Endothelial cell of umbilical vein (primary cell): ENCODE measurements at regions of chr5 and their contacts with region 1.

Region 1: GRCh38 chr5:96565582-96566265 is 96.5 kb upstream of the CAST start:
- DNase-seq: peak; percentile 79
- H3K4me3 ChIP-seq: no peak overlapping the region
- H3K27ac ChIP-seq: peak overlapping the region; percentile 97
- H3K4me1 ChIP-seq: peaks cover 71% of the 10 kb centered on the region
- H3K27me3 ChIP-seq: no peaks in the 10 kb centered on the region
- CTCF ChIP-seq: no peak
- POLR2A ChIP-seq: no peak

Region 2: DNA sequence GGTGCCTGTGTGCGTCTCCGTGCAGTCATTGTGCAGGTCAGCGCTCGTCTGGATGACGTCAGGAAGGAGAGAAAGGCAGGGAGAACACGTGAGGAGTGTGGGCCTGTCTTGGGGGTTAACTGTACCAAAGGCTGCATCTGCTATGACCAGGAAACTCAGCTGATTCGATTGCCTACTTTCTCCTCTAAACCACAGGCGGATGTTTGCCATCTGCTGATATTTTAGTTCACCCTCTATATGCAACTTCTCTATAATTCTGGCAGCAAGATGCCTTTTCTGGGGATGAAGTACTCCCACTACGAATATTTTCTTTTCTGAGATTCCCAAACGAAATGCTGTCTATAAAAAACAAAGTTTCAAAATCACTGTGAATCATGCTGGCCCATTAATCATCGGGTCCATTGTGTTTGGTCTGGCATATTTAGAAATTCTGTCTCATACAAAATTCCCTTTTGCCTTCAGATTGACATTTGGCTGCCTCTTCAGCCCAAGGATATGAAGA is 157.4 kb before region 1 on chr5:
- CTCF ChIA-PET with region 1: no interaction called
- POLR2A ChIA-PET with region 1: no interaction called
- dilution Hi-C with region 1: no loop called
- intact Hi-C with region 1: loop called (anchors 1 kb)
- DNase-seq: peak; percentile 89
- H3K4me3 ChIP-seq: no peak overlapping the region
- H3K27ac ChIP-seq: peak overlapping the region; percentile 84
- H3K4me1 ChIP-seq: peaks cover 33% of the 10 kb centered on the region
- H3K27me3 ChIP-seq: no peaks in the 10 kb centered on the region
- CTCF ChIP-seq: no peak
- POLR2A ChIP-seq: no peak

Region 3: GRCh38 chr5:96536991-96537785 is 28.5 kb before region 1 on chr5:
- CTCF ChIA-PET with region 1: interaction called, 9 read pairs
- POLR2A ChIA-PET with region 1: interaction called, 3 read pairs
- dilution Hi-C with region 1: no loop called
- intact Hi-C with region 1: loop called (anchors 1 kb)
- DNase-seq: peak; percentile 87
- H3K4me3 ChIP-seq: no peak overlapping the region
- H3K27ac ChIP-seq: peak overlapping the region; percentile 100
- H3K4me1 ChIP-seq: peaks cover 37% of the 10 kb centered on the region
- H3K27me3 ChIP-seq: no peaks in the 10 kb centered on the region
- CTCF ChIP-seq: no peak
- POLR2A ChIP-seq: peak; percentile 37

Region 4: GRCh38 chr5:96595300-96596090 is 29.8 kb after region 1 on chr5:
- CTCF ChIA-PET with region 1: interaction called, 16 read pairs
- POLR2A ChIA-PET with region 1: no interaction called
- dilution Hi-C with region 1: no loop called
- intact Hi-C with region 1: loop called (anchors 1 kb)
- DNase-seq: peak; percentile 80
- H3K4me3 ChIP-seq: no peak overlapping the region
- H3K27ac ChIP-seq: peak overlapping the region; percentile 79
- H3K4me1 ChIP-seq: peaks cover 79% of the 10 kb centered on the region
- H3K27me3 ChIP-seq: no peaks in the 10 kb centered on the region
- CTCF ChIP-seq: peak; percentile 19 to 56
- POLR2A ChIP-seq: no peak

Region 5: DNA sequence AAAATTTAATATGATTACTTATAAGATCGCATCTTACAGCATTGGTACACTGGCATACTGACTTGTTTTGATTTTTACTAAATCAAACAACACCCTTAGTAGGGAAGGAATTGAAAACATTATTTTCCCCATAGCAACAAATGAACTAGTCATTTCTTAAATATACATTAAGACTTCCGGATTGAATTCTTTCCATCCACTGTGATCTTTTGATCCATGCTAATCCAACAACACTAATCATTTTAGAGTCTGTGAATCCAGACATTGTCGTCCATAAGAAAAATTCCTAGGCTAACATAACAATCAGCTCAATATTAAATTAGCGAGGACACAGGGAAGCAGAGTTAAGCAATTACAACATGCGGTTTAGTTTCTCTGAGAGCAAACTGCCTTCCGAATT is 263.6 kb after region 1 on chr5:
- CTCF ChIA-PET with region 1: no interaction called
- POLR2A ChIA-PET with region 1: no interaction called
- dilution Hi-C with region 1: no loop called
- intact Hi-C with region 1: loop called (anchors 2 kb)
- DNase-seq: peak; percentile 67
- H3K4me3 ChIP-seq: no peak overlapping the region
- H3K27ac ChIP-seq: peak overlapping the region; percentile 24
- H3K4me1 ChIP-seq: no peaks in the 10 kb centered on the region
- H3K27me3 ChIP-seq: no peaks in the 10 kb centered on the region
- CTCF ChIP-seq: no peak
- POLR2A ChIP-seq: no peak

Region 6: GRCh38 chr5:97267767-97268166 is 702.0 kb after region 1 on chr5:
- CTCF ChIA-PET with region 1: no interaction called
- POLR2A ChIA-PET with region 1: no interaction called
- dilution Hi-C with region 1: no loop called
- intact Hi-C with region 1: no loop called
- DNase-seq: no peak
- H3K4me3 ChIP-seq: no peak overlapping the region
- H3K27ac ChIP-seq: no peak overlapping the region
- H3K4me1 ChIP-seq: no peaks in the 10 kb centered on the region
- H3K27me3 ChIP-seq: no peaks in the 10 kb centered on the region
- CTCF ChIP-seq: no peak
- POLR2A ChIP-seq: no peak